ENCODE measurements at regions of chr17 and their contacts with region 1.

Region 1: DNA sequence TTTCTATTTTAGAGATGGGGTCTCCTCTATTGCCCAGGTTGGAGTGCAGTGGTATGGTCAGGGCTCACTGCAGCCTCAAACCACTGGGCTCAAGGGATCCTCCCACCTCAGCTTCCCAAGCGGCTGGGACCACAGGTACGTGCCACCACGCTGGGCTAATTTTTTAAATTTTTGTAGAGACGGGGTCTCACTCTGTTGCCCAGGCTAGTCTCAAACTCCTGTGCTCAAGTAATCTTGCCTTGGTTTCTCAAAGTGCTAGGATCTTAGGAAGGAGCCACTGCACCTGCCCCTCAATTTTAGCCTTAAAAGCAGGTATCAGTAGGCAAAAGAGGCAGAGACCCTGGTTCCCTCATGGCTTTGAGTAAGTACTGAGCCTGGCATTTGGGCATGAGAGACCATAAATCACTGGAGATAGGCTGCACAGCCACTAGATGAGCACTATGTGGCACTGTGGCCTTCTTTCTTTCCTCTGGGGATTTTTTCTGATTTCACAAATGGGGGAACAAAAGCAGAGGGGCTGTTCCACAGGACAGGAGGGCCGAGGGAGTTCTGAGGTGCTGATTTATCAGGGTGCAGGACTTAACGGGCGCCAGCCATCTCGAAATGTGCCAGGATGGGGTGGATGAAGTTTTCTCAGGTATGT is 82.2 kb downstream of the PLXDC1 start:
- DNase-seq: no peak
- ATAC-seq: peak in 7 of 8 donors; percentile 37 to 64 (median 44)
- H3K4me3 ChIP-seq: no peak overlapping the region
- H3K27ac ChIP-seq: no peak overlapping the region
- H3K4me1 ChIP-seq: peaks cover 0 to 8% (median 4%) of the 10 kb centered on the region in 9 donors
- H3K27me3 ChIP-seq: no peaks in the 10 kb centered on the region
- CTCF ChIP-seq: peak; percentile 36 to 72 (median 61)

Region 2: DNA sequence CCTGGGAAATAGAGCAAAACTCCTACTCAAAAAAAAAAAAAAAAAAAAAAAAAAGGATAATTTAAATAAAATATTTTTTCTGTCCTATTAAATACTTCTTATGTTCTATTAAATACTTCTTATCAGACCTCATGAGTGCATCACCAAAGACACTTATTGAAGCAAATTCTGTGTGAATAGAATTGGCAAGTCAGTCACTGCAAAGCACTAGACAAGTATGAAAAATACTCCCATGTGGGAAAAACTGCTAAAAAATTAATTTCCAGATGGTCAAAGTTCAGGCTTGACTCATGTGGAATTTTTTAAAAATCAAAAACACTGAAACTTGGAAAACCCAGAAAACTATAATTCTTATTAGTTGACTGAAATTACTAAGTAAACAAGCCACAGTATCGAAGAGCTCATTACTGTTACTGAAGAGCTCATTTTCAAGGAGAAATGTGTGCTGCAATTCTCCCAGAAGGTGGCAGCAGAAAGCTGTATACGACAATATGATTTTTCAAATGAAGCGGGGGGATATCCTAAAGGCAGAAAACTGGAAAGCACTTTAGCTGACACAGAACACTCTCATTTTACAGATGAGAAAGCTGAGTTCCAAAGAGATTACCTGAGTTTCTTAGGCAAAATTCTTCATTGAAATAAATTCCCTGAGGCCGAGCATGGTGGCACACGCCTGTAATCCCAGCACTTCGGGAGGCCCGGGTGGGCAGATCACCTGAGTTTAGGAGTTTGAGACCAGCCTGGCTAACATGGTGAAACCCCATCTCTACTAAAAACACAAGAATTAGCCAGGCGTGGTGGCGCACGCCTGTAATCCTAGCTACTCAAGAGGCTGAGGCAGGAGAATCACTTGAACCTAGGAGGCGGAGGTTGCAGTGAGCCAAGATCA is 86.1 kb before region 1 on chr17:
- intact Hi-C with region 1: loop called in 3 of 10 experiments (anchors 5 to 10 kb)
- DNase-seq: peak in 1 of 2 donors; percentile 70
- ATAC-seq: peak in 7 of 8 donors; percentile 52 to 79 (median 74)
- H3K4me3 ChIP-seq: no peak overlapping the region
- H3K27ac ChIP-seq: peak overlapping the region in 5 of 10 donors; percentile 8 to 71 (median 55)
- H3K4me1 ChIP-seq: peaks cover 0 to 9% (median 3%) of the 10 kb centered on the region in 9 donors
- H3K27me3 ChIP-seq: no peaks in the 10 kb centered on the region
- CTCF ChIP-seq: peak; percentile 66 to 92 (median 84)

Region 3: DNA sequence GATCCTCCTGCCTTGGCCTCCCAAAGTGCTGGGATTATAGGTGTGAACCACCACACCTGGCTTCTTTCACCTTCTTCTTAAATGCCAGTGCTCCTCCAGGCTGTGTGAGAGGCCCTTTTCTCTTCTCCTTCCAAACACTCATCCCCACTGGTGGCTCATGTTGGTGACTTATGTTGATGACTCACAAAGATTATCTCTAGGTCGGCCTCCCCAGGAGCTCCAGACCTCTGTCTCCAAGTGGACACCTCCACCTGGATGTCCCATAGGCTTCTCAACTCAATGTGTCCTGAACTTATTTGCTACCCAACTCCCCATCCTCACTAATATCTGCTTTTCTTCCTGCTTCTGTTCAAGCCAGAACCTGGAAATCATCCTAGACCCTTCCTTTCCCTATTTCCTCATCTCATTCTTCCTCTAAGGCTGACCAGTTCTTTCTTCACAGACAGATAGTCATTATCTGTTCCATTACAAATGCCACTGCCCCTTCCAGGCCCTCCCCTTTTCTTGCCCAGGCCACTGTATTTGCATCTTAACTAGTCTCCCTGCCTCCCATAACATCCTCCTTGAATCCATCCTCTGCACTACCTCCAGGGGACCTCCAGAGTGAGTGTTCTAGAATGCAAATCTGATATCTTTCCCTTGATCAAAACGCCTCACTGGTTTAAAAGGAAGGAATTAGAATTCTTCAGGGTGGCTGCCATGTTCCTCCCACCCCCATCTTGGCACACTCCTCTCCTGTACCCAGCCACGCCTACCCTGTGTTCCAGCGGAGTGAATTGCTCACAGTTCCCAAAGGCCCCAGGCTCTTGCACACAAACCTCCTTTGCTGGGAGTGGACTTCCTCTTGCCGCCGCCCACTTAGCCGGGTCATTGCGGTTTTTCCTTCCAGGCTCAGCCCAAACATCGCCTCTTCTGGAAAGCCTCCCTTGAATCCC is 67.3 kb before region 1 on chr17:
- intact Hi-C with region 1: loop called in 1 of 10 experiments (anchors 10 kb)
- DNase-seq: peak; percentile 82 to 91
- ATAC-seq: peak; percentile 92 to 95 (median 94)
- H3K4me3 ChIP-seq: peak overlapping the region in 8 of 10 donors; percentile 6 to 44 (median 30)
- H3K27ac ChIP-seq: peak overlapping the region; percentile 88 to 97 (median 93)
- H3K4me1 ChIP-seq: peaks cover 4 to 48% (median 30%) of the 10 kb centered on the region in 9 donors
- H3K27me3 ChIP-seq: no peaks in the 10 kb centered on the region
- CTCF ChIP-seq: peak in 2 of 9 donors; percentile 4 to 13

Region 4: GRCh38 chr17:39026980-39027451 is 42.2 kb before region 1 on chr17:
- intact Hi-C with region 1: loop called in 1 of 10 experiments (anchors 5 kb)
- DNase-seq: peak; percentile 73 to 82
- ATAC-seq: peak; percentile 79 to 95 (median 93)
- H3K4me3 ChIP-seq: peak overlapping the region; percentile 35 to 66 (median 51)
- H3K27ac ChIP-seq: peak overlapping the region in 7 of 10 donors; percentile 15 to 74 (median 67)
- H3K4me1 ChIP-seq: peaks cover 0 to 20% (median 6%) of the 10 kb centered on the region in 9 donors
- H3K27me3 ChIP-seq: peaks cover 0 to 20% (median 0%) of the 10 kb centered on the region in 7 donors
- CTCF ChIP-seq: peak in 1 of 9 donors; percentile 13

Region 5: DNA sequence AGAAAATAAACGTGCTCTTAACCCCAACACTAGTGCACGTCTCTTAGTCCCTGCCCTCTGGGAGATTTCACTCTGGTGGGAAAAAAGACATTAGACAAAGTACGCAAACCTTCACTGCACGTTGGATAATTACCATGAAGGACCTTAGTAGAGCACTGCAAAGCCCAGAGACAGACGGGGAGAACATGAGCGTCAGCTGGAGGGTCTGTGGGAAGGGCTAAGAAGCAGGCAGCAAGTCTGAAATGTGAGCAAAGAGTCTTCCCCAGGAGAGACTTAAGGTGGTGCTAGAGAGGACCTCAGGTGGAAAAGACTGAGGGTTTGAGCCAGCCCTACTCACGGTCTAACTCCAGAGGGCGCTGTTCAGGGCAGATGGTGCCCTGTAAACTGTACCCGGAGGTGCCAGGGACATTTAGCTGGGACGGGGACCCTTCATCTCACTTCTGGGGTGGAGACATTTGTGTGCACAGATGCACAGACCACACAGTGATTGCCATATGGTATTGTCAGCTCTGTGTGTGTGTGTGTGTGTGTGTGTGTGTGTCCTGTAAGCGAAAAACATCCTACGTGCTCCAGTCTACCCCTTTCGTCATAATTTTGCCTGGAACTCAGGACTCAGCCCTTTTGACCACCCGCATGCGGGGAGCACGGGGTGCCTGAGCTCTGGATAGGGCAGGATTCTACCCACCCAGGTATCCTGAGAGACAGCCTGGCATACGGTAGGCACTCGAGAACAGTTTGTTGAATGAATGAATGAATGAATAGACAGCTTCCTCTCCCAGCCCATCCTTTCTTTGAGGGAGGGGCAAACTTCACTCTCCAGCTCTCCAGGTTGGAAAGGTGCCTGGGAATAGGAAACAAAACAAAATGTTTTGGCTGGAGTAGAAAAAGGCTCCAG is 166.6 kb after region 1 on chr17:
- intact Hi-C with region 1: loop called in 1 of 10 experiments (anchors 10 kb)
- DNase-seq: no peak
- ATAC-seq: peak in 1 of 8 donors; percentile 14
- H3K4me3 ChIP-seq: no peak overlapping the region
- H3K27ac ChIP-seq: no peak overlapping the region
- H3K4me1 ChIP-seq: peaks cover 3 to 25% (median 14%) of the 10 kb centered on the region in 9 donors
- H3K27me3 ChIP-seq: peaks cover 3 to 58% (median 35%) of the 10 kb centered on the region in 7 donors
- CTCF ChIP-seq: peak in 7 of 9 donors; percentile 37 to 57 (median 47)